Psoas muscle (tissue), 8 donors: ENCODE measurements at regions of chr5 and their contacts with region 1.

Region 1: DNA sequence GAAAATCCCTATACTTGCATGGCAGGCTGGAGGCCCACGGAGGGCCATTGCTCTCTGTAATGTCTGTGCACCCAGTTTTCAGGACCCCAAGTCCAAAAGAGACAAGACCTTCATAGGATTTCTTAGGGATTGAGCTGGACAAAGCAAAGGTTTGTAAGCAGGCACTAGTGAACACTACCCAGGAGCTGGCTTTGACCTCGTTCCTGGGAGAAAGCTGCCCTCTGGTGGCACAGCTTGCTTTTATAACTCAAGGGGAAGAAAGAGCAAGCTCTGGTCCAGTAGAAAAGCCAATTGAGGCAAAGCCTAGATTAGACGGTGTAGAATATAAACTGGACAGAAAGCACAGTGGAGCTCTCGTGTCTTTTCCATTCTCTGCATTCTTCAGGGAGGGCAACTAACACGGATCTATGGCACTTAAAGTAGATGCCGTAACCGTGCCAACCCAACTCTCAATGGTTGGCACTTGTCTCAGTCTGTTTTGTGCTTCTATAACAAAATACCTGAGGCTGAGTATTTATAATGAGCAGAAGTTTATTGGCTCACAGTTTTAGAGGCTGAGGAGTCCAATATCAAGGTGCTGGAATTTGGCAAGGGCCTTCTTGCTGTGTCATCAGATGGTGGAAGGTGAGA is 7.9 kb downstream of the GABRP start:
- DNase-seq: peak in 1 of 2 donors; percentile 29
- ATAC-seq: no peak
- H3K4me3 ChIP-seq: no peak overlapping the region
- H3K27ac ChIP-seq: no peak overlapping the region
- H3K4me1 ChIP-seq: no peaks in the 10 kb centered on the region
- H3K27me3 ChIP-seq: peaks cover 0 to 3% (median 0%) of the 10 kb centered on the region in 3 donors
- CTCF ChIP-seq: peak; percentile 40

Region 2: GRCh38 chr5:170747851-170748250 is 43.6 kb before region 1 on chr5:
- intact Hi-C with region 1: loop called (anchors 1 to 10 kb)
- DNase-seq: no peak
- ATAC-seq: no peak
- H3K4me3 ChIP-seq: no peak overlapping the region
- H3K27ac ChIP-seq: no peak overlapping the region
- H3K4me1 ChIP-seq: no peaks in the 10 kb centered on the region
- H3K27me3 ChIP-seq: peaks cover 0 to 30% (median 8%) of the 10 kb centered on the region in 3 donors
- CTCF ChIP-seq: peak; percentile 20